ENCODE measurements at regions of chr4 and their contacts with region 1.

Region 1: DNA sequence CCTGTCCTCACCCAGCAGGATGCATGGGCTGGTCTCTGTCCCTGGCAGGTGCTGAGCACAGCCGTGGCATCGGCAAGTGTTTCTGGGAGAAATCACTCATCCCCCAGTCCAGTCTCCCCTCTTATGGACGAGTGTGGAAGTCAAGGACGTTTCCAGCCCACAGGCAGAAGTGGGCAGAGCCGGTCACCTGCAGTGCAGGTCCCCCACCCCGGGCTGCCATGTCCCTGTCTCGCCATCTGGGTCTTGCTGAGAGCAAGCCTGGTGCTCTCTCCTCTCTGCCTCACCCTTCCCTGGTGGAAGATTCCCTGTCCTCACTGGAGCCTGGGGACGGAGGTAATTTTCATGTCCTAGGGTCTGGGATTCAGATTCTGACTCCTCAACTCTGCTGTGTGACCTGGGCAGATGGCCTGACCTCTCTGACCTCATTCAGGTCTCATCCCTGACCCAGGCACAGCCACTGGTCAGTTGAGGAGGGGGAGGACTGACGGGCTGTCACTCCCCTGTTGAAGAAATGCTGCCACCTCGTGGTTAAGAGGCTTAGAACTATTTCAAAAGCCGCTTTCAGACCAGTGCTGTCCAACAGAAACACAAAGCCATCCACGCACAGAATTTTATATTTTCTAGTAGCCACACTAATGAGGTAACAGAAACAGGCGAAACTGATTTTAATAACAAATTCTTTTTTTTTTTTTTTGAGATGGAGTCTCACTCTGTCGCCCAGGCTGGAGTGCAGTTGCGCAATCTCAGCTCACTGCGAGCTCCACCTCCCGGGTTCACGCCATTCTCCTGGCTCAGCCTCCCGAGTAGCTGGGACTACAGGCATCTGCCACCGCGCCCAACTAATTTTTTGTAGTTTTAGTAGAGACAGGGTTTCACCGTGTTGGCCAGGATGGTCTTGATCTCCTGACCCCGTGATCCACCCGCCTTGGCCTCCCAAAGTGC is 1.8 kb downstream of the CPZ start:
- DNase-seq: peak; percentile 73 to 81
- H3K4me3 ChIP-seq: no peak overlapping the region
- H3K4me3 Mint-ChIP-seq: peak overlapping the region; percentile 60
- H3K27ac Mint-ChIP-seq: peak overlapping the region; percentile 51
- H3K4me1 ChIP-seq: peaks cover 17% of the 10 kb centered on the region
- H3K4me1 Mint-ChIP-seq: peaks cover 6% of the 10 kb centered on the region
- H3K27me3 ChIP-seq: no peaks in the 10 kb centered on the region; the same call in 1 of the 2 replicates
- H3K27me3 Mint-ChIP-seq: peaks cover 2% of the 10 kb centered on the region
- CTCF ChIP-seq: peak; percentile 68 to 78

Region 2: DNA sequence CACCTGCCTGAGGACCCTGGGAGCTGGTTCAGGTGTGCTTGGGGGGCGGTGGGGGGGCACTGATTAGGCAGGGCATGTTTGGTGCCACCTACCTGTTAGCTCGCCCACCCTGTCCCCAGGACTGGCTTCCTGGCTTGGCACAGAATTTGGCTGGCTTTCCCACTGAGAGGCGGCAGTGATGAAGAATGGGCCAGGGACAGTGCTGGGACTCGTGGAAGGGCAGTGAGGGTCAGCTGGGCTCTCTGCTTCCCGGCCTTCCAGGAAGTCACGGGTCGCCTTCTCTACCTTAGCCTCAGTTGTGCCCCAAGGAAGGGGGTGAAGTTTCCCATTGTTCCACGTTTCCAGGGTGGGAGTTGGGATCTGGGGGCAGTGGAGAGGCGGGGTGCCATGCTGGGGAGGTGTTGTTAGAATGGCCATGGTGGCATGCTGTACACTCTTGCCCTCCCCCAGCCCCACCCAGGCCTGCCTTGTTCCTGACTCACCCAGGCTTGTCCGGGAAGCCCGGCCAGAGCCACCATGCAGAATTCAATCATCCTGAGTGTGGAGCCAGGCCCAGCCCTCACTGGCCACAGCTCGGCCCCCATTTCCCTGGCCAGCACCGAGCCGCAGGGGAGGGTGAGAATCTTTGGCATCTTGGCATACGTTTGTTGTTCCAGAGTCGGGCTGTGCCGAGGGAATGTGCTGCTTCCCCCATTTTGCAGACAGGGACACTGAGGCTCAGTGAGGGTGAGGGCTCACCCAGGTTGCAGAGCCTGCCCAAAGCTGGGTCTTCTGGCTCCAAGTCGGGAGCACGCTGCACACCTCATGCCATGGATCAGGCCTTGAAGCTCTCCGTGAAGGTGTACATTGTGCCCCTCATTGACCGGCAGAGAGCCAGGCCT is 36.0 kb before region 1 on chr4:
- CTCF ChIA-PET with region 1: no interaction called
- POLR2A ChIA-PET with region 1: no interaction called
- intact Hi-C with region 1: loop called (anchors 5 kb)
- DNase-seq: no peak
- H3K4me3 ChIP-seq: no peak overlapping the region
- H3K4me3 Mint-ChIP-seq: no peak overlapping the region
- H3K27ac Mint-ChIP-seq: peak overlapping the region; percentile 19
- H3K4me1 ChIP-seq: peaks cover 65% of the 10 kb centered on the region
- H3K4me1 Mint-ChIP-seq: peaks cover 29% of the 10 kb centered on the region
- H3K27me3 ChIP-seq: no peaks in the 10 kb centered on the region
- H3K27me3 Mint-ChIP-seq: no peaks in the 10 kb centered on the region
- CTCF ChIP-seq: no peak

Measured in Caco-2 (cell line).